ENCODE measurements at regions of chr18 and their contacts with region 1.

Region 1: GRCh38 chr18:3995476-3996102 is 459.5 kb downstream of the DLGAP1 start:
- DNase-seq: peak; percentile 77
- H3K4me3 Mint-ChIP-seq: no peak overlapping the region
- H3K27ac Mint-ChIP-seq: no peak overlapping the region
- H3K4me1 Mint-ChIP-seq: no peaks in the 10 kb centered on the region
- H3K27me3 Mint-ChIP-seq: no peaks in the 10 kb centered on the region
- CTCF ChIP-seq: peak; percentile 73

Region 2: DNA sequence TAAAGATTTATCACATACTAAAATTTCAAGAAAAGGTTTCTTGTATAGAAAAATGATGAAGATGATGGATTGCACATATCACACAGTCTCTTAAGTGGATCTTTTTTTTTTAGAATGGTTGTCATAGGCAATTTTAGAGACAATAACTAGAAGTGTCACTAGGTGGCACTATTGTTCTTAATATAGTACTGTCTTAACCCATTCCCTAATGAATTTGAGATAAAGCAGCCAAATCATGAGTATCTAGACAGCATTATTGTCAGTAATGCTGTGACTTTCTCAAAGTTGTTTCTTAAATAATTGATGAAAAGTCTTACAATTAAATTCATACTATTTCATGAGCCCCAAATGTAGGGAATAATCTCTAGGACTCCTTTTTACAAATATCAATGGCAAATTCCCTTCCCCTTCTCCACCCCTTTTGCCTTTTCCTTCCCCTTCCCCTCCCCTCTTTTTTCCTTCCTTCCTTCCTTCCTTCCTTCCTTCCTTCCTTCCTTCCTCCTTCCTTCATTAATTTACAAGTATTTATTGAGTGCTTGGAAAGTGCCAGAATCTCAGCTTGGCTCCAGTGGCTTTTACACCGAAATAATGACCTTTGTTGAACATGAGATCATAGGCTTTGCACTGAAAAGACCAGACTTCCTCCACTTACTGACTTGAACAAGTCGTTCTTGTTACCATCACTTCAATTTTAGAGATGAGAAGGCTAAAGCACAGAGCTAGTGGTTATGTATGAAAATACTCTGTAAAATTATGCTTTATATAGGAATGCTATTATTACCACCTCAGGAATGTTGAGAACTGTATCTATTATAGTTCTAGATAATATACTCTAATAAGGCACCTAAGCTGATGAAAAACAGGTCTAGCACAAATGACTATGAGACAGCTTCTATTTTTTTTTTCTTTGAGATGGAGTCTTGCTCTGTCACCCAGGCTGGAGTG is 713.9 kb before region 1 on chr18:
- CTCF ChIA-PET with region 1: interaction called, 3 read pairs
- POLR2A ChIA-PET with region 1: interaction called, 3 read pairs
- intact Hi-C with region 1: loop called (anchors 10 kb)
- DNase-seq: peak; percentile 80
- H3K4me3 Mint-ChIP-seq: no peak overlapping the region
- H3K27ac Mint-ChIP-seq: no peak overlapping the region
- H3K4me1 Mint-ChIP-seq: peaks cover 6% of the 10 kb centered on the region
- H3K27me3 Mint-ChIP-seq: no peaks in the 10 kb centered on the region
- CTCF ChIP-seq: peak; percentile 52

Region 3: GRCh38 chr18:3422905-3423304 is 572.7 kb before region 1 on chr18:
- CTCF ChIA-PET with region 1: no interaction called
- POLR2A ChIA-PET with region 1: no interaction called
- intact Hi-C with region 1: no loop called
- DNase-seq: no peak
- H3K4me3 Mint-ChIP-seq: no peak overlapping the region
- H3K27ac Mint-ChIP-seq: no peak overlapping the region
- H3K4me1 Mint-ChIP-seq: no peaks in the 10 kb centered on the region
- H3K27me3 Mint-ChIP-seq: no peaks in the 10 kb centered on the region
- CTCF ChIP-seq: no peak

Region 4: GRCh38 chr18:3604498-3605408 is 390.8 kb before region 1 on chr18:
- CTCF ChIA-PET with region 1: no interaction called
- POLR2A ChIA-PET with region 1: no interaction called
- intact Hi-C with region 1: no loop called
- DNase-seq: peak; percentile 91
- H3K4me3 Mint-ChIP-seq: no peak overlapping the region
- H3K27ac Mint-ChIP-seq: no peak overlapping the region
- H3K4me1 Mint-ChIP-seq: no peaks in the 10 kb centered on the region
- H3K27me3 Mint-ChIP-seq: no peaks in the 10 kb centered on the region
- CTCF ChIP-seq: no peak

Region 5: GRCh38 chr18:3703732-3704176 is 291.8 kb before region 1 on chr18:
- CTCF ChIA-PET with region 1: interaction called, 65 read pairs
- POLR2A ChIA-PET with region 1: no interaction called
- intact Hi-C with region 1: loop called (anchors 1 kb)
- DNase-seq: peak; percentile 66
- H3K4me3 Mint-ChIP-seq: no peak overlapping the region
- H3K27ac Mint-ChIP-seq: no peak overlapping the region
- H3K4me1 Mint-ChIP-seq: peaks cover 9% of the 10 kb centered on the region
- H3K27me3 Mint-ChIP-seq: no peaks in the 10 kb centered on the region
- CTCF ChIP-seq: peak; percentile 61

Region 6: GRCh38 chr18:3869848-3870247 is 125.7 kb before region 1 on chr18:
- CTCF ChIA-PET with region 1: interaction called, 40 read pairs
- POLR2A ChIA-PET with region 1: no interaction called
- intact Hi-C with region 1: loop called (anchors 1 kb)
- DNase-seq: peak; percentile 68
- H3K4me3 Mint-ChIP-seq: no peak overlapping the region
- H3K27ac Mint-ChIP-seq: no peak overlapping the region
- H3K4me1 Mint-ChIP-seq: no peaks in the 10 kb centered on the region
- H3K27me3 Mint-ChIP-seq: peaks cover 21% of the 10 kb centered on the region
- CTCF ChIP-seq: peak; percentile 65

Region 7: GRCh38 chr18:3983351-3983969 is 12.1 kb before region 1 on chr18:
- CTCF ChIA-PET with region 1: interaction called, 52 read pairs
- POLR2A ChIA-PET with region 1: interaction called, 4 read pairs
- intact Hi-C with region 1: no loop called
- DNase-seq: peak; percentile 59
- H3K4me3 Mint-ChIP-seq: no peak overlapping the region
- H3K27ac Mint-ChIP-seq: peak overlapping the region; percentile 14
- H3K4me1 Mint-ChIP-seq: peaks cover 21% of the 10 kb centered on the region
- H3K27me3 Mint-ChIP-seq: no peaks in the 10 kb centered on the region
- CTCF ChIP-seq: no peak

Region 8: DNA sequence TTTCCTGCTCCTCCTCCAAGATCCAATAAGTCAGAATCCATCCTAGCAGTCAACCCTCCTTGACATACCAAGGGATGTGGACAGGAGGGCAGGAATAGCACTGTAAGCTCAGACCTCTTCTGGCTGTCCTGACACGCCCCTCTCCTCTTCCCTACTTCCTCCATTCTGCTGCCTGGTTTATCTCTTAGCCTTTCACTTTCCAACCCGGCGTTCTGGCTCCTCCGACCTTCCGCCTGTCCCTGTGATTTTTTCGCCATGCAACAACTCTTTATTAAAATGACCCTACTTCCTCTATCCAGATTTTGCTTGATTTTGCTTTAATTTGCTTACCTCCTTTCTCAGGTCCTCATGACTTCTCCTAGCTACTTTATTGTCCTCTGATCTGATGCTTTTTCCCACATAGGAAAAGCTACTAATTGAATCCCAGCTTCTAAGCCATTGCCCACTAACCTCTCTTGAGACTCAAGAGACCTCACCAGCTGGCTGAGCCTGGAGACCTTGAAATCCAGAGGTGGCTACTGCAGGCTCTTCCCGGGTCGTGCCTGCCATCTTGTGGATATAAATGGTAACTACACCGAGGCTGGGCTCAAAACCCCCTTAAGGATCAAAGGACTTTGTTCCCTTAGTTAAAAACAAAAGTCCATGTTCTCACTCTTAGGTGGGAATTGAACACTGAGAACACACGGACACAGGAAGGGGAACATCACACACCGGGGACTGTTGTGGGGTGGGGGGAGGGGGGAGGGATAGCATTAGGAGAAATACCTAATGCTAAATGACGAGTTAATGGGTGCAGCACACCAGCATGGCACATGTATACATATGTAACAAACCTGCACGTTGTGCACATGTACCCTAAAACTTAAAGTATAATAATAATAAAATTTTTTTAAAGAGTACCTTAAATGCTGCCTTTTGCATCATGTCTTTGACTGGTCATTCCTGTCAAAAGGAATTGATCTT is 1062.1 kb after region 1 on chr18:
- CTCF ChIA-PET with region 1: interaction called, 3 read pairs
- POLR2A ChIA-PET with region 1: no interaction called
- intact Hi-C with region 1: loop called (anchors 10 kb)
- DNase-seq: peak; percentile 0
- H3K4me3 Mint-ChIP-seq: no peak overlapping the region
- H3K27ac Mint-ChIP-seq: no peak overlapping the region
- H3K4me1 Mint-ChIP-seq: peaks cover 5% of the 10 kb centered on the region
- H3K27me3 Mint-ChIP-seq: no peaks in the 10 kb centered on the region
- CTCF ChIP-seq: peak; percentile 87

Measured in MCF 10A (cell line).